Activated CD8-positive, alpha-beta T cell treated with anti-CD3 and anti-CD28 coated beads for 36 hours (primary cell): ENCODE measurements at regions of chr17 and their contacts with region 1.

Region 1: DNA sequence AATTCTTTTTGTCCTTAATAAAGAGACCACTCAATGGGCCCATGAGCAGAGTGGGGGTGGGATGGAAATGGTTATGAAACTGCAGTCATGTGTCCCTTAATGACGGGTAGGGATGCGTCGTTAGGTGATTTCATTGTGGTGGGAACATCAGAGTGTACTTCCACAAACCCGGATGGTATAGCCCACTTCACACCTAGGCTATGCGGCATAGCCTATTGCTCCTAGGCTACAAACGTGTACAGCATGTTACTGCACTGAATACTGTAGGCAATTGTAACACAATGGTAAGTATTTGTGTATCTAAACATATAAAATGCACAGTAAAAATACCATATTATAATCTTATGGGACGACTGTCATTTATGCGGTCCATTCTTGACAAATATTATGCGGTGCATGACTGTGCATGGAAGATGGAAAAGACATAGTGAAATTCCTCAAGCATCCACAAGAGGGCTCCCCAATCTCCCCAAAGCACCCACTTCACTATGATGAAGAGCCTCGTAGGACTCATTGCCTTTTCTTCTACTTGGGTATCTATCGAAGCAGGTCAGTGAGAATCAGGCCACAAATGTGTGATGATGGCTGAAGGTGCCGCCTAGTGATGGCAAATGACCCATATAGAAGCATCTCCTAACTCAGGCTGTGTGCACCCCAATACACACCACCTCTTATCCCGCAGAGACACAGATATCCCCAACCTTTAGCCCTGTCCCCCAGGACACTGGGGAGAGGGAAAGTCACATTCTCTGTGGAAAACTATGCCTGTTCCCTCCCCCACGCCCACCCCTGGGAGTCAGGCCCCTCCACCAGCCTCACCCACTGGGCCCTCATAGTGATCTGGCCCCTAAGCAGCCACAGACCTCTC is 43.5 kb downstream of the TBX21 start:
- DNase-seq: peak; percentile 47
- ATAC-seq: peak; percentile 98
- H3K4me3 Mint-ChIP-seq: no peak overlapping the region
- H3K27ac Mint-ChIP-seq: no peak overlapping the region
- H3K4me1 Mint-ChIP-seq: no peaks in the 10 kb centered on the region
- H3K27me3 Mint-ChIP-seq: peaks cover 39% of the 10 kb centered on the region
- CTCF ChIP-seq: peak; percentile 89

Region 2: GRCh38 chr17:47763913-47764582 is 12.5 kb before region 1 on chr17:
- CTCF ChIA-PET with region 1: no interaction called
- POLR2A ChIA-PET with region 1: no interaction called
- intact Hi-C with region 1: no loop called
- DNase-seq: no peak
- ATAC-seq: peak; percentile 88
- H3K4me3 Mint-ChIP-seq: no peak overlapping the region
- H3K27ac Mint-ChIP-seq: no peak overlapping the region
- H3K4me1 Mint-ChIP-seq: peaks cover 11% of the 10 kb centered on the region
- H3K27me3 Mint-ChIP-seq: peaks cover 7% of the 10 kb centered on the region
- CTCF ChIP-seq: no peak

Region 3: GRCh38 chr17:47802341-47803022 is 25.9 kb after region 1 on chr17:
- CTCF ChIA-PET with region 1: interaction called, 5 read pairs
- POLR2A ChIA-PET with region 1: no interaction called
- intact Hi-C with region 1: loop called (anchors 1 kb)
- DNase-seq: peak; percentile 71
- ATAC-seq: peak; percentile 98
- H3K4me3 Mint-ChIP-seq: no peak overlapping the region
- H3K27ac Mint-ChIP-seq: no peak overlapping the region
- H3K4me1 Mint-ChIP-seq: no peaks in the 10 kb centered on the region
- H3K27me3 Mint-ChIP-seq: peaks cover 4% of the 10 kb centered on the region
- CTCF ChIP-seq: peak; percentile 84